IMR-90 (cell line): ENCODE measurements at regions of chr9 and their contacts with region 1.

Region 1: GRCh38 chr9:17531642-17532254 is 47.1 kb upstream of the SH3GL2 start:
- DNase-seq: peak; percentile 60
- ATAC-seq: peak; percentile 83
- H3K4me3 ChIP-seq: peak overlapping the region; percentile 24; the same call in 1 of the 2 replicates
- H3K27ac ChIP-seq: no peak overlapping the region
- H3K4me1 ChIP-seq: no peaks in the 10 kb centered on the region
- H3K27me3 ChIP-seq: peaks cover 2% of the 10 kb centered on the region; the same call in 1 of the 2 replicates
- CTCF ChIP-seq: peak; percentile 91
- POLR2A ChIP-seq: no peak
- RAD21 ChIP-seq: peak; percentile 70

Region 2: GRCh38 chr9:17802249-17802857 is 270.6 kb after region 1 on chr9:
- CTCF ChIA-PET with region 1: interaction called, 9 read pairs
- POLR2A ChIA-PET with region 1: no interaction called
- dilution Hi-C with region 1: loop called (anchors 25 kb)
- in situ Hi-C with region 1: loop called (anchors 5 kb)
- intact Hi-C with region 1: loop called (anchors 1 kb)
- DNase-seq: peak; percentile 16
- ATAC-seq: peak; percentile 60
- H3K4me3 ChIP-seq: no peak overlapping the region
- H3K27ac ChIP-seq: no peak overlapping the region
- H3K4me1 ChIP-seq: no peaks in the 10 kb centered on the region
- H3K27me3 ChIP-seq: peaks cover 4% of the 10 kb centered on the region
- CTCF ChIP-seq: peak; percentile 69
- POLR2A ChIP-seq: no peak
- RAD21 ChIP-seq: peak; percentile 49

Region 3: GRCh38 chr9:18189871-18190670 is 658.3 kb after region 1 on chr9:
- CTCF ChIA-PET with region 1: no interaction called
- POLR2A ChIA-PET with region 1: no interaction called
- dilution Hi-C with region 1: no loop called
- in situ Hi-C with region 1: loop called (anchors 10 kb)
- intact Hi-C with region 1: no loop called
- DNase-seq: peak; percentile 38
- ATAC-seq: no peak; the same call in none of the 2 replicates
- H3K4me3 ChIP-seq: no peak overlapping the region
- H3K27ac ChIP-seq: no peak overlapping the region
- H3K4me1 ChIP-seq: no peaks in the 10 kb centered on the region
- H3K27me3 ChIP-seq: no peaks in the 10 kb centered on the region
- CTCF ChIP-seq: no peak
- POLR2A ChIP-seq: no peak
- RAD21 ChIP-seq: no peak

Region 4: GRCh38 chr9:19028835-19029451 is 1497.2 kb after region 1 on chr9:
- CTCF ChIA-PET with region 1: no interaction called
- POLR2A ChIA-PET with region 1: no interaction called
- dilution Hi-C with region 1: no loop called
- in situ Hi-C with region 1: loop called (anchors 25 kb)
- intact Hi-C with region 1: loop called (anchors 10 kb)
- DNase-seq: peak; percentile 75
- ATAC-seq: peak; percentile 95
- H3K4me3 ChIP-seq: no peak overlapping the region
- H3K27ac ChIP-seq: no peak overlapping the region
- H3K4me1 ChIP-seq: no peaks in the 10 kb centered on the region
- H3K27me3 ChIP-seq: no peaks in the 10 kb centered on the region; the same call in 1 of the 2 replicates
- CTCF ChIP-seq: peak; percentile 83
- POLR2A ChIP-seq: no peak
- RAD21 ChIP-seq: peak; percentile 86